Natural killer cell (primary cell): ENCODE measurements at regions of chr10 and their contacts with region 1.

Region 1: DNA sequence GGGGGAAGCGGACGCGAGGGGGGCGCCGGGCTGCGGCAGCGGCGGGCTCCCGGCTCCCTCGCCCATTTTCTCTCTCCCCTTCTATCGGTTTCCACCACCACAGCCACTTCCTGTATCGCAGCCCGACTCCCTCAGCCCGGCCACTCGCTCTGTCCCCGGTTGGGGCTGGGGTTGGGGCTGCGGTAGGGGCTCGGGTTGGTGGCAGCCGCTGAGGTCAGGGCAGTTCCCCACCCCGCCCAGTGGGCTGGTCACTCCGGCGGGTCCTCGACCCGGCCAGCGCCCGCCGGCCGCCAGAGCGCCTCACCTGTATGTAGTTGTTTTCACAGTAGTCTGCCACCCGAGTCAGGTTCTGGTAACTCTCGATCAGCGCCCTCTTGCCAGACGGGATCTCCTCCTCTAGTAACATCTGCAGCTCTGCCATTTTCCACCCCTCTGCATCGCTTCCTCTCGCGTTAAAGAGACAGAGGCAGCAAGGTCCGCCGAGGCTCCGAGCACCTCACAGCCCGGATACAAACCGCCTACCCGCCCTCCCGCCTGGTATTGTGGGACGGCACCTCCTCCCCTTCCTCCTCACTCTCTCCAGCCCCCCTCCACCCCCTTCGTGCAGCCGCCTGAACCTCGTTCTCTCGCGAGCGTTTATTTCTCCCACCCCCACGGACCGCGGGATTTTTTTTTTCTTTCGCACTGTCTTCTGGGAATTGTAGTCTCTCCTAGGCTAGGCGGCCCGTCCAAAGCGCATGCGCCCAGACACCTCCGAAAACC is at the start of gene ABI1:
- DNase-seq: peak; percentile 92 to 100
- ATAC-seq: peak; percentile 83 to 91 (median 86)
- H3K4me3 ChIP-seq: peak within 1 kb of the TSS; percentile 78
- H3K4me3 Mint-ChIP-seq: peak within 1 kb of the TSS; percentile 95
- H3K27ac ChIP-seq: peak within 1 kb of the TSS; percentile 91
- H3K27ac Mint-ChIP-seq: peak within 1 kb of the TSS; percentile 94 to 98
- H3K4me1 ChIP-seq: peaks cover 26% of the 10 kb centered on the region
- H3K4me1 Mint-ChIP-seq: peaks cover 44 to 48% of the 10 kb centered on the region in 2 donors
- H3K27me3 ChIP-seq: no peaks in the 10 kb centered on the region
- H3K27me3 Mint-ChIP-seq: peaks cover 3 to 7% of the 10 kb centered on the region in 2 donors
- CTCF ChIP-seq: no peak
- total RNA-seq, gene ABI1: 94.8 to 116 (median 113) TPM

Region 2: DNA sequence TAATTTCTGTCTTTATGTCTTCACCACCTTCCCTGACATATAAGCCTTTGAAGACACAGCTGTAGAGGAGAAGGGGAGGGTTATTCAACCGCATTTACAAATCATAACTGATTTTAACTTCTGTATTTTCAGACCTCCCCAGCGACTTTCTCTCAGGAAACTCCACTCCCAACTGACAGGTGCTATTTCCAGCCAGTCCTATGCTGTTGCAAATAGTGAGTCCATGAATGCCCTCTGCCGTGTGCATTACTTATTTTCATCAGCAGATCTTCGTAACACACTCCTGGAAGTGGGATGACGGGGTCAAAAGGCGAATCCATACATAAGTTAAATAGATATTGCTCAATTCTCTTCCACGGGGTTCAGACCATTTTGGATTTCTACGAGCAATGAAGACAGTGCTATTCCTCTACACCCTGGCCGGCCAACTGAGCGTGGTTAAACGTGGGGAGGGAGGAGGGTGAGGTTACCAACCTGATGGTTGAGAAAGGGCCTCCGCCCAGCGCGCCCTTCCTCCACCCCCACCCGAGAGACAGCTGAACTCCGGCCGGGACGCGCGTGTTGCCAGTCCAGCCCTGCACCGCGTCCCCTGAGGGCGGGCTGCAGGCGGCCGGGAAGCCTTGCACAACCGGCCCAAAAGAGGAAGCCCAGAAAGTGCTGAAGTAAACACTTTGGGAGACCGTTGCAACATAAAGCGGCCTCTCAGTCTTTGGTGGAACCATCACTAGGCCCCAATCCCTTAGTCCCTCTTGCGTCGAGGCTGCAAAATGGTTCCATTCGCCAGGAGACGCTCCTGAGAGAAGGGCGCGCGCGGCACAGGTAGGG is 422.8 kb before region 1 on chr10 and contains the start of gene APBB1IP:
- intact Hi-C with region 1: loop called (anchors 5 kb)
- DNase-seq: peak; percentile 58 to 76
- ATAC-seq: peak; percentile 49 to 82 (median 58)
- H3K4me3 ChIP-seq: peak within 1 kb of the TSS; percentile 70
- H3K4me3 Mint-ChIP-seq: peak within 1 kb of the TSS; percentile 97
- H3K27ac ChIP-seq: peak within 1 kb of the TSS; percentile 89
- H3K27ac Mint-ChIP-seq: peak within 1 kb of the TSS; percentile 85 to 97
- H3K4me1 ChIP-seq: peaks cover 24% of the 10 kb centered on the region
- H3K4me1 Mint-ChIP-seq: peaks cover 50 to 56% of the 10 kb centered on the region in 2 donors
- H3K27me3 ChIP-seq: no peaks in the 10 kb centered on the region
- H3K27me3 Mint-ChIP-seq: no peaks in the 10 kb centered on the region
- CTCF ChIP-seq: no peak
- total RNA-seq, gene APBB1IP: 92.5 to 119 (median 100) TPM

Region 3: GRCh38 chr10:26725837-26726727 is 134.5 kb before region 1 on chr10:
- intact Hi-C with region 1: loop called (anchors 5 kb)
- DNase-seq: peak in 1 of 2 donors; percentile 81
- ATAC-seq: peak in 2 of 3 donors; percentile 42 to 45
- H3K4me3 ChIP-seq: no peak overlapping the region
- H3K4me3 Mint-ChIP-seq: no peak overlapping the region
- H3K27ac ChIP-seq: no peak overlapping the region
- H3K27ac Mint-ChIP-seq: no peak overlapping the region
- H3K4me1 ChIP-seq: peaks cover 14% of the 10 kb centered on the region
- H3K4me1 Mint-ChIP-seq: peaks cover 14% of the 10 kb centered on the region in 2 donors
- H3K27me3 ChIP-seq: no peaks in the 10 kb centered on the region
- H3K27me3 Mint-ChIP-seq: no peaks in the 10 kb centered on the region
- CTCF ChIP-seq: peak; percentile 95

Region 4: GRCh38 chr10:26839966-26840627 is 20.5 kb before region 1 on chr10:
- intact Hi-C with region 1: loop called (anchors 1 kb)
- DNase-seq: no peak
- ATAC-seq: no peak
- H3K4me3 ChIP-seq: no peak overlapping the region
- H3K4me3 Mint-ChIP-seq: peak overlapping the region; percentile 57
- H3K27ac ChIP-seq: no peak overlapping the region
- H3K27ac Mint-ChIP-seq: peak overlapping the region; percentile 85 to 90
- H3K4me1 ChIP-seq: peaks cover 26% of the 10 kb centered on the region
- H3K4me1 Mint-ChIP-seq: peaks cover 81 to 88% of the 10 kb centered on the region in 2 donors
- H3K27me3 ChIP-seq: no peaks in the 10 kb centered on the region
- H3K27me3 Mint-ChIP-seq: no peaks in the 10 kb centered on the region
- CTCF ChIP-seq: no peak

Region 5: DNA sequence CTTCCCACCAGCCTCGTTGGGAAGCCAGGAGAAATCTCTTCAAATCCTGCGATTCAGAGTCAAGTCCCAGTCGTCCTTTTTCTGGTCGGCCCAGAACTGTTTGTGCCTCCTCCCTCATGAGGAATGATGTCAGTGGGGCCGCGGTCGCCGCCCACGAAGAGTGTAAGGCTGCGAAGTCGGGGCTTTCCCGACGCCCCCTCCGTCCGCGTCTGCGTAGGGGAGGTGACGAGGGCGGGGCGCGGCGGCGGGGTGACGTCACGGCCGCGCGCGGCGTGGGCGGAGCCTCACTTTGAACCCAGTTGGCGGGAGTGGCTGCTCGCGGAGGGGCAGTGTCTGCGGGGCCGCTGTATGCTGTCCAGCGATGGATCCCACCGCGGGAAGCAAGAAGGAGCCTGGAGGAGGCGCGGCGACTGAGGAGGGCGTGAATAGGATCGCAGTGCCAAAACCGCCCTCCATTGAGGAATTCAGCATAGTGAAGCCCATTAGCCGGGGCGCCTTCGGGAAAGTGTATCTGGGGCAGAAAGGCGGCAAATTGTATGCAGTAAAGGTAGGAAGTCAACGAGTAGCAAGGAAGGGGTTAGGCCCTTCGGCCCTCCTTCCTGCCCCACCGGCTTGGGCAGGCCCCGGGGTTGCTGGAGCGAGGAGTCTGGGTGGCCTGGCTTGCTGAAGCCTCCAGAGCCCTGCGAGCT is 294.6 kb after region 1 on chr10 and contains the start of gene MASTL:
- intact Hi-C with region 1: loop called (anchors 2 kb)
- DNase-seq: peak; percentile 96 to 97
- ATAC-seq: peak; percentile 78 to 93 (median 82)
- H3K4me3 ChIP-seq: peak within 1 kb of the TSS; percentile 87
- H3K4me3 Mint-ChIP-seq: peak within 1 kb of the TSS; percentile 100
- H3K27ac ChIP-seq: peak within 1 kb of the TSS; percentile 98
- H3K27ac Mint-ChIP-seq: peak within 1 kb of the TSS; percentile 100
- H3K4me1 ChIP-seq: peaks cover 22% of the 10 kb centered on the region
- H3K4me1 Mint-ChIP-seq: peaks cover 47 to 53% of the 10 kb centered on the region in 2 donors
- H3K27me3 ChIP-seq: no peaks in the 10 kb centered on the region
- H3K27me3 Mint-ChIP-seq: no peaks in the 10 kb centered on the region
- CTCF ChIP-seq: no peak
- total RNA-seq, gene MASTL: 10.1 to 21.2 (median 11.5) TPM

Region 6: GRCh38 chr10:28532383-28533175 is 1672.0 kb after region 1 on chr10 and contains the start of gene WAC:
- intact Hi-C with region 1: loop called (anchors 10 kb)
- DNase-seq: peak; percentile 97 to 98
- ATAC-seq: peak; percentile 77 to 92 (median 81)
- H3K4me3 ChIP-seq: peak within 1 kb of the TSS; percentile 83
- H3K4me3 Mint-ChIP-seq: peak within 1 kb of the TSS; percentile 100
- H3K27ac ChIP-seq: peak within 1 kb of the TSS; percentile 97
- H3K27ac Mint-ChIP-seq: peak within 1 kb of the TSS; percentile 100
- H3K4me1 ChIP-seq: peaks cover 18% of the 10 kb centered on the region
- H3K4me1 Mint-ChIP-seq: peaks cover 59 to 81% of the 10 kb centered on the region in 2 donors
- H3K27me3 ChIP-seq: no peaks in the 10 kb centered on the region
- H3K27me3 Mint-ChIP-seq: no peaks in the 10 kb centered on the region
- CTCF ChIP-seq: no peak
- total RNA-seq, gene WAC: 225 to 245 (median 226) TPM